Psoas muscle (tissue), 8 donors: ENCODE measurements at regions of chr7 and their contacts with region 1.

Region 1: DNA sequence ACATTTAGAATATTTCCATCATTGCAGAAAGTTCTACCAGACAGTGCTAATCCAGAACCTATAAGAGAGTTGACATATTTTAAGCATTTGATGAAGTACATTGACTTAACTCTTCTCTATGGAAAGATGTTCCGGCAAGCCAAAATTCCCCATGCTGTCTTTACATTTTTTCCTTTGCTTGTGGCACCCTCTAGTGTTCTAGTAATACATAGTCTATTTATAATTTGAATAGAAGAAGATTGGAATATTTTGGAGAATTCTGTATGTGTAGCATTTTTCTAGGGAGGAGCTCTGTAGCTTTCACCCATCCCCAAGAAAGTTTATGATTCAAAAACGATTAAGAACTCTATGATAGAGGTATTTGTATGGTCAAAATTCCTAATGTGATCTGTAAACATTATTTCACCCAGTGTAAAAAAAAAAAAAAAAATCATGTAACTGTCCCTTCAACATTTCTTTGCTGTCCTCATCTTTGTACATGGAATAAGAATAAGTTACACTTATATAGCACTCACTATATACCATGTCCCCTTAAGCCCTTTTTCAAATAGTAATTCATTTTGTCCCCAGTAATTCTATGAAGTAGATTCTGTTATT is 33.2 kb downstream of the NRF1 start:
- DNase-seq: no peak
- ATAC-seq: peak in 3 of 4 donors; percentile 26 to 55 (median 46)
- H3K4me3 ChIP-seq: no peak overlapping the region
- H3K27ac ChIP-seq: no peak overlapping the region
- H3K4me1 ChIP-seq: peaks cover 15% of the 10 kb centered on the region
- H3K27me3 ChIP-seq: no peaks in the 10 kb centered on the region
- CTCF ChIP-seq: peak; percentile 46

Region 2: GRCh38 chr7:129343099-129343700 is 301.5 kb before region 1 on chr7:
- intact Hi-C with region 1: loop called in 1 of 2 experiments (anchors 10 kb)
- DNase-seq: no peak
- ATAC-seq: peak; percentile 57 to 84 (median 70)
- H3K4me3 ChIP-seq: no peak overlapping the region
- H3K27ac ChIP-seq: no peak overlapping the region
- H3K4me1 ChIP-seq: peaks cover 34% of the 10 kb centered on the region
- H3K27me3 ChIP-seq: no peaks in the 10 kb centered on the region
- CTCF ChIP-seq: peak; percentile 79